ENCODE measurements at regions of chr15 and their contacts with region 1.

Region 1: DNA sequence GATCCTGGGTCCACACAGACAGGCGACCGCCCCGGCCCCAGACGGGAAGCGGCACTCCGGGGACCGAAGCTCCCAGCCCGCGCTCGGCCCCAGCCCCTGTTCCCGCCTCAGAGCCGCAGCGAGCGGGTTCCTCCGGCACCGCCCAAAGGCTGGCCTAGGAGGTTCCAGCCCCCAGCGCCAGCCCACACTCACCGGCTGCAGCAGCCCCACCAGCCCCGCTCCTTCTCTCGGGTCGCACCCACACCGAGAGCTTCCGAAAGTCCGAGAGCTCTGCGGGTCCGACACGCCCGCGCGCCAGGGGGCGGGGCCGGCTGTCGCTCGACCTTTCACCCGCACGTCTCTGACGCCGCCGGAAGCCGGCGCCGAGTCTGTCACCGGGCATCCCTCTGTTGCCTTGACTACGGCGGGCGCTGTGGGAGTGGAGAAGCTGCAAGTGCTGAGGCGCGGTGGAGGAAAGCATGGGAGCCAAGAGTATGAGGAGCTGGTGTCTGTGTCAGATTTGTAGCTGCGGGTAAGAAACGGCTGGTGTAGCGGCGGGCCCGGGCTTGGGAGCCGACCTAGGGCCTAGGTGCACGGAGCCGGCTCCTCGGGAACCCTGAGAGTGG is at the starts of genes EFL1 and SAXO2:
- DNase-seq: no peak
- H3K4me3 ChIP-seq: peak within 1 kb of the TSS; percentile 79
- CTCF ChIP-seq: no peak

Region 2: GRCh38 chr15:82275410-82275809 is 12.9 kb after region 1 on chr15:
- CTCF ChIA-PET with region 1: interaction called, 11 read pairs
- POLR2A ChIA-PET with region 1: no interaction called
- DNase-seq: no peak
- H3K4me3 ChIP-seq: no peak overlapping the region
- CTCF ChIP-seq: no peak

Measured in AG04449 (cell line).